HAP-1 (cell line): ENCODE measurements at regions of chr12 and their contacts with region 1.

Region 1: GRCh38 chr12:12661086-12661485 is 34.9 kb downstream of the GPR19 start:
- DNase-seq: peak; percentile 43 to 98
- H3K4me3 ChIP-seq: no peak overlapping the region
- H3K4me1 ChIP-seq: peaks cover 32% of the 10 kb centered on the region
- H3K27me3 ChIP-seq: no peaks in the 10 kb centered on the region

Region 2: DNA sequence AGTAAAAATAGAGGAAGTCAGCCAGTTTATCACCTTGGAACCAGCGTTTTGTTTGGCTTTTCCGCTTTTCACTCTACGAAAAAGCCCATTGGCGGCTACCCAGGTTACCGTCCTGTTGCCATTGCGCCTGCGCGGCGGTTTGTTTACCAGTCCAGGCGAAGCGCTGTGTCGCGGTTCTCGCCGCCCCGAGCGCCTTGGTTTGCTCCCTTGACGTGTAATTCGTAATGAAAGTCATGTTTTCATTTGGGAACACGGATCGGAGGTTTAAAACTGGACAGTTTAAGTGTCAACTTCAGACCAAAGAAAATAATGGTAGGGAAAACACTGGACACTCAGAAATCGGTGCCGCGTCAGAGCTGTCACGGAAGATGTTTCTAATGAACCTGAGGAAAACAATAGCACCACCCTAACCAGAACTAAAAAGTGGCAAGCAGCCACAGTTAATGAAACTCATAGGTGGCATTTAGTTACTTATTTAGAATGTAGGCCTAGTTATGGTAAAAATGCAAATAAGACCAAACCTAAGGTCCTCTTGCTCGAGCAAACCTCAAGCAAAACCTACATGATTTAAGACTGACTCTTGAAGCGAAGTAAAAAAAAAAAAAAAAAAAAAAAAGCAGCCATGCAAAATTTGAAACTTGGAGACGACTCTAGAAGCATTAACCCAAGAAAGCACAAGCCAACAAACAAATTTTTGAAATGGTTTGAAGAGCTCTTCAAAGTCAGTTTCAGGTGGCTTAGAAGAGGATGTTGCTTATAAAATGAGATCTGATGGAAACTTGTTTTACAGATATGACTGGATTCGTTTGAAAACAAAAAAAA is 35.7 kb after region 1 on chr12:
- in situ Hi-C with region 1: loop called (anchors 5 kb)
- DNase-seq: peak; percentile 76 to 90
- H3K4me3 ChIP-seq: peak overlapping the region; percentile 41
- H3K4me1 ChIP-seq: peaks cover 20% of the 10 kb centered on the region
- H3K27me3 ChIP-seq: no peaks in the 10 kb centered on the region

Region 3: DNA sequence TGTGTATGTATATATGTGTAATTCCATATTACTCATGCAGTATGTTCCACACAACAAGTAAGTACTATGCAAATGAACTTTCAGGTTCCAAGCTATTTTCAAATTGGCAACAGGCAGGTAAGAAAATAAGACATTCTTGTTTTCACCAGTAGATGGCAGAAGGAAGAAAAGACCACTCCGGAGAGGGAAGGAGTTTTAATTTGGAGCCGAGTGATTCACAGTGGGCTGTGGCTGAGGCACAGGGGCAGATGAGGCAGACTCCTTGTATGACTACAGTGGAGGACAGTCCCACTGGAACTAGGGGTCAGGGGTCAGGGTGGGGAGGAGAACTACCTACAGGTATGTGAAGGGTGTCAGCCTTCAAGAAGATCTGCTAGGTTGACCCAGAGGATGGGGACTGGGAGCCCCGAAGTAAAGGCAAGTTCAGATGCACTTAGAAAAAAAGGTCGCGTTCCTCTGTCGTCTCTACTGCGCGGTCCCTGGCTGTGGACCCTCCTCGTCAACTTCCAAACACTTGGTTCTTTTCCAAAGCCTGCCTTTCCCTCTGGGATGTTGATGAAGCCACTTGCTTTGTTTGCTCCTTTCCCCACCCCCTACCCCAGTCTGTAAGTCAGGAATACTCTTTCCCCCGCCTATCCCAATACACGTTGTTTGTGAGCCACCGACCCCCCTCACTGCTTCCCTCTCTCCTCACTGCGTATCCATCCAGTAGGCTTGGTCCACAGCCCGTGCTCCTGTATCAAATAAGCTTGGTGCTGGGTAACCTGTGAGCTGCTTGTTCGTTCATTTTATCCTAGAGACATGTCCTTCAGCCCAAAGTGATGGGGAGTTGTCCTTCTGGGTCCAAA is 176.2 kb after region 1 on chr12:
- in situ Hi-C with region 1: no loop called
- DNase-seq: peak; percentile 20 to 52
- H3K4me3 ChIP-seq: no peak overlapping the region
- H3K4me1 ChIP-seq: no peaks in the 10 kb centered on the region
- H3K27me3 ChIP-seq: no peaks in the 10 kb centered on the region